Posterior cingulate gyrus (tissue), 11 donors: ENCODE measurements at regions of chr1 and their contacts with region 1.

Region 1: DNA sequence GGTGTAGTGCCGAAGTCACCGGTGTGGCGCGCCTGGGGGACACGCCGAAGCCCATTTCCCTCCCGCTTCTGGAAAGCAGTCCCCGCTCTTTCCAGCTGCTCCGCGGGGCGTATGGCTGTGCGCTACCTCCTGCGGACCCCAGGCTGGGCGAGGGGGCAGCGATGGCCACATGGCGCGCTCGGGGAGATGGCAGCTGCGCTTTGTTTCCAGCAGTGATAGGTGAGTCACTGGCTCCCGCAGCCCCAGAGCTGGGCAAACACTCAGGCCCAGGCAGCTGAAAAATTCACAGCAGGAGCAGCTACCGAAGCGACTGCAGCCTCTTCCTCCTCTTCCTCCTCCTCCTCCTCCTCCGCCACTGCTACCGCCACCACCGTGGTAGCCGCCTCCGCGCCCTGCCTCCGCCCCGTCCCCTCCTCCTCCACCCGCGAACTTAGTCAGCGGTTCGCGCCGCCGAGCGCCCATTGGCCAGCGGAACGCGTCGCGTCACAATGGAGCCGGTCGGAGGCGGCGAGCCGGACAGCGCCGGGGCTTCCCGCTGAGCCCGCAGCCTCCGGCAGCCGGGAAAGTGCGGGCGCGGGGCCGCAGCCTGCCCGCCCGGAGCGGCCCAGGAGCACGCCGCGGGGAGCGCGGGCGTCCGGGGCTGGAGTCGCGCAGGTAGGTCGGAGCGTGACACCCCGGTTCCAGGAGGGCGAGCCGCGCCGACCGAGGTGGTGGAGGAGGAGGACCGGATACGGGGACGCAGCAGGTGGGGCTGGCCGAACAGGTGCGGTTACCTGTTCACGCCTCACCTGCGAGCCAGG is at the start of gene LRRC8B:
- DNase-seq: peak; percentile 89 to 99 (median 92)

Region 2: GRCh38 chr1:89762779-89763648 is 238.4 kb after region 1 on chr1:
- intact Hi-C with region 1: loop called (anchors 5 kb)
- DNase-seq: peak; percentile 82 to 98 (median 88)